Activated naive CD4-positive, alpha-beta T cell treated with anti-CD3 and anti-CD28 coated beads for 36 hours (primary cell): ENCODE measurements at regions of chr14 and their contacts with region 1.

Region 1: GRCh38 chr14:60753264-60754119 is 18.9 kb downstream of the MNAT1 start:
- DNase-seq: peak; percentile 78
- H3K4me3 Mint-ChIP-seq: peak overlapping the region; percentile 14
- H3K27ac Mint-ChIP-seq: peak overlapping the region; percentile 37
- H3K4me1 Mint-ChIP-seq: peaks cover 35% of the 10 kb centered on the region
- H3K27me3 Mint-ChIP-seq: peaks cover 2% of the 10 kb centered on the region

Region 2: DNA sequence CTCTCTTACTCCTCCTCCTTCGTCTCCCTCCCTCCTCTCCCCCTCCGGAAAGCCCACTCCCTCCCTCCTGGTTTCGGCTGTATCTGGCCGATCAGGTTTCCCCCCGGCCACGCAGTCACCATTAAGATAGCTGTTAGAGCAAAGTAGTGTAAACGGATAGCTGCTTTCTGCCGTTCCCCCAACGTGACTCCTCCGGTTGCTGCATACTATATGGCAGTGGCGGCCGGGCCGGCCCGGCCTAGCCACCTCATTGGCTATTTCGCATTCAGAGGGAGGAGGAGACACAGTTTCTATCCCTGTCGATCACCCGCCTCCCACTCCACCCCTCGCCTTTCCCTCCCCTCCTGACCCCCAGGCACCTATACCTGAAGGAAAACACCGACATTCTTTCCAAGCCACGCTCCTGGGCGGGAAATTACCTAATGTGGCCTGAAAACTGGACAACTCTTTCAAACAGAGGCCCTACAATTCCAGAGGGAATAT is 29.3 kb before region 1 on chr14 and contains the start of gene SIX4:
- CTCF ChIA-PET with region 1: no interaction called
- intact Hi-C with region 1: loop called (anchors 2 kb)
- DNase-seq: peak; percentile 15
- H3K4me3 Mint-ChIP-seq: peak within 1 kb of the TSS; percentile 78
- H3K27ac Mint-ChIP-seq: no peak within 1 kb of the TSS
- H3K4me1 Mint-ChIP-seq: peaks cover 19% of the 10 kb centered on the region
- H3K27me3 Mint-ChIP-seq: peaks cover 71% of the 10 kb centered on the region
- total RNA-seq, gene SIX4: not detected

Region 3: DNA sequence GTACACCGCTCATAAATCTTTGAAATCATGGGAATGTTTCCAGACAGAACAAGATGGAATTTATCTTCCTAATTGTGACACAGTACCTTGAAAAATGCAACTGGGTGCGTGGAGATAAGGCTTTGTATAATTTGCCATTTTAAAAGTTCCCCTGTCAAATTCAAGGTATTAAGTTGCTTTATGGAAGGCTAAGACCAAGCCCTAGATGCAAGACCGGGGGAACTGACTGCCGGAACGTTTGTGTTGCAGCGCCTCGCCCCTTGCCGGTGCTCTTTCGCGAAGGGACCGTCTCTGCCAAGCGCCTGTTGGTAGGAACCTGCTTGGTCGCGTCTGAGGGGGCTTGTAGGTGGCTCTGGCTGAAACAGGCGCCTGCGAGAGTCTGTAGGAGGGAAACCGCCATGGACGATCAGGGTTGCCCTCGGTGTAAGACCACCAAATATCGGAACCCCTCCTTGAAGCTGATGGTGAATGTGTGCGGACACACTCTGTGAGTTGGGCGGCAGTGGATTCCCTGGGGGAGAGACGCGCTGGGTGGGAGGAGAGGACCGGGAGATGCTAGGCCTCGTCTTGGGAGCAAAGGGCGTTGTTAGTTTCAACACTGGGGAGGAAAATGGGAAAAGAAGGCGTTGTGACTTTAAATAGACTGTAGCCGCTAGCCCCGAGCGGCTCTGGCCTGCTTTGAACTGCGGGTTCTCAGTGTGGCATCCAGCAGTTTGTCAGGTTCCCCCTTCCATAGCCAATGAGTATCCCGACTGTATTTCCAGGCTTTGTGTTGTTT is 18.8 kb before region 1 on chr14 and contains the start of gene MNAT1:
- CTCF ChIA-PET with region 1: no interaction called
- intact Hi-C with region 1: loop called (anchors 1 kb)
- DNase-seq: peak; percentile 83
- H3K4me3 Mint-ChIP-seq: peak within 1 kb of the TSS; percentile 97
- H3K27ac Mint-ChIP-seq: peak within 1 kb of the TSS; percentile 86
- H3K4me1 Mint-ChIP-seq: peaks cover 17% of the 10 kb centered on the region
- H3K27me3 Mint-ChIP-seq: peaks cover 10% of the 10 kb centered on the region
- total RNA-seq, gene MNAT1: 44.0 to 44.2 TPM

Region 4: DNA sequence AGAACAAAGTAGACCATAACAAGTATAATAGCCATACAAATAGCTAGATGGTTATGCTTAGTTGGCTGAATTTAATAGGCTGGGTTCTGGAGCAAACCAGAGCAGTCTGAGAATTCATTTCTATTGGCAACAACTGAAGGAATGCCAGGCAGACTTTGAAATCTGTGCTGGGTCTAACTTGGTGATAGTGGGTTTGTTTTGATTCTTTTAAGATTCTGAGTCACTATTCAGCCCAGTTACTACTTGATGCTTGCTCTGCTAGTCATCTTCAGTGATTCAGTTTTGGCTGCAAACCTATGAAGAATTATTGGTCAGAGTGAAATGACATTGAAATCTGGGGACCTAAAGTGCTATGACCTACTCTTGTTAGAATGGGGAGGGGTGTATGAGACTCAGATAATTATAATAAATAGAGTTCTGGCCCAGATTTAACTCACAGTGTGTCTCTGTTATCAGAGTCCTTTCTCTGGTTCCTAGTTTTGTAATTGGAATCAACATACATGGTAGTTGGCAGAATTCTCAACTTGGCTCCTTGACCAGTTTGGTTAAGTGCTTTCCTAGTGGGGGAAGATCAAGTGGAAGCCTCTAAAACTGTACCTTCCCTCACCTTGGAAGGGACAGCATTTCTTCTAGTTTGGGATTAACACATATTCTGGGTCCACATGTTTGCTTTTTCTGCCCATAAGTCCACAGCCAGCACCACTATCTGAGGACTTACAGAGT is 24.5 kb after region 1 on chr14:
- CTCF ChIA-PET with region 1: no interaction called
- intact Hi-C with region 1: loop called (anchors 1 kb)
- DNase-seq: no peak
- H3K4me3 Mint-ChIP-seq: no peak overlapping the region
- H3K27ac Mint-ChIP-seq: no peak overlapping the region
- H3K4me1 Mint-ChIP-seq: peaks cover 16% of the 10 kb centered on the region
- H3K27me3 Mint-ChIP-seq: no peaks in the 10 kb centered on the region

Region 5: GRCh38 chr14:60859525-60859924 is 106.0 kb after region 1 on chr14:
- CTCF ChIA-PET with region 1: no interaction called
- intact Hi-C with region 1: loop called (anchors 1 kb)
- DNase-seq: no peak
- H3K4me3 Mint-ChIP-seq: no peak overlapping the region
- H3K27ac Mint-ChIP-seq: no peak overlapping the region
- H3K4me1 Mint-ChIP-seq: peaks cover 14% of the 10 kb centered on the region
- H3K27me3 Mint-ChIP-seq: no peaks in the 10 kb centered on the region

Region 6: DNA sequence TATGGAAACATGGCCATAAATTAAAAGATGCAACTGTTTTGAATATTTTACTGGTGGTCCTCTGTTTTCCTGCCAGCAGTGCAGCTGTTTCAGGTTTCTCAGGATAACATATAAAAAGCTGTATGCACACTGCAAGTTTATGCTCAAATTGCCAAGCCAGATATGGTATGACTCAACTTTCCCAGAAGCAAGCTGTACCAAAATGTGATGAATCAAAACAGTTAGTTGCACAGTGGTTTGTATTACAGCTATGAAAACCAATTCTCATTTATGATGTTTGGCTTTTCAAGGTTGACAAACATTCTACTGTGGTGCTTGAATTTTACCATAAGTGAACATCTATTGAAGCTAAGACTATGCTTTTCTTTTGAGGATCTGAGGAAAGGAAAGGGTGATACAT is 211.9 kb after region 1 on chr14:
- CTCF ChIA-PET with region 1: no interaction called
- intact Hi-C with region 1: loop called (anchors 1 kb)
- DNase-seq: peak; percentile 22
- H3K4me3 Mint-ChIP-seq: no peak overlapping the region
- H3K27ac Mint-ChIP-seq: no peak overlapping the region
- H3K4me1 Mint-ChIP-seq: peaks cover 13% of the 10 kb centered on the region
- H3K27me3 Mint-ChIP-seq: no peaks in the 10 kb centered on the region